T-cell (primary cell): ENCODE measurements at regions of chr12 and their contacts with region 1.

Region 1: GRCh38 chr12:43758728-43759563 is at the starts of genes IRAK4 and PUS7L:
- DNase-seq: peak; percentile 87 to 98 (median 94)
- ATAC-seq: peak; percentile 94 to 99 (median 96)
- H3K4me3 ChIP-seq: peak within 1 kb of the TSS; percentile 64 to 93
- H3K4me3 Mint-ChIP-seq: peak within 1 kb of the TSS; percentile 97 to 98 (median 98)
- H3K27ac ChIP-seq: peak within 1 kb of the TSS; percentile 98
- H3K27ac Mint-ChIP-seq: peak within 1 kb of the TSS; percentile 99
- H3K4me1 ChIP-seq: peaks cover 27 to 32% of the 10 kb centered on the region in 2 experiments
- H3K4me1 Mint-ChIP-seq: peaks cover 83 to 86% (median 84%) of the 10 kb centered on the region in 3 donors
- H3K27me3 ChIP-seq: no peaks in the 10 kb centered on the region
- H3K27me3 Mint-ChIP-seq: no peaks in the 10 kb centered on the region
- total RNA-seq, gene IRAK4: 48.7 to 55.8 (median 49.8) TPM
- total RNA-seq, gene PUS7L: 17.5 to 24.9 (median 19.2) TPM

Region 2: GRCh38 chr12:43789941-43790340 is 31.0 kb after region 1 on chr12:
- CTCF ChIA-PET with region 1: interaction called in 1 of 2 experiments, 5 read pairs
- POLR2A ChIA-PET with region 1: interaction called in 1 of 2 experiments, 20 read pairs
- DNase-seq: no peak
- ATAC-seq: no peak
- H3K4me3 ChIP-seq: no peak overlapping the region
- H3K4me3 Mint-ChIP-seq: no peak overlapping the region
- H3K27ac ChIP-seq: no peak overlapping the region
- H3K27ac Mint-ChIP-seq: peak overlapping the region in 1 of 2 donors; percentile 24
- H3K4me1 ChIP-seq: no peaks in the 10 kb centered on the region
- H3K4me1 Mint-ChIP-seq: no peaks in the 10 kb centered on the region
- H3K27me3 ChIP-seq: no peaks in the 10 kb centered on the region
- H3K27me3 Mint-ChIP-seq: no peaks in the 10 kb centered on the region

Region 3: DNA sequence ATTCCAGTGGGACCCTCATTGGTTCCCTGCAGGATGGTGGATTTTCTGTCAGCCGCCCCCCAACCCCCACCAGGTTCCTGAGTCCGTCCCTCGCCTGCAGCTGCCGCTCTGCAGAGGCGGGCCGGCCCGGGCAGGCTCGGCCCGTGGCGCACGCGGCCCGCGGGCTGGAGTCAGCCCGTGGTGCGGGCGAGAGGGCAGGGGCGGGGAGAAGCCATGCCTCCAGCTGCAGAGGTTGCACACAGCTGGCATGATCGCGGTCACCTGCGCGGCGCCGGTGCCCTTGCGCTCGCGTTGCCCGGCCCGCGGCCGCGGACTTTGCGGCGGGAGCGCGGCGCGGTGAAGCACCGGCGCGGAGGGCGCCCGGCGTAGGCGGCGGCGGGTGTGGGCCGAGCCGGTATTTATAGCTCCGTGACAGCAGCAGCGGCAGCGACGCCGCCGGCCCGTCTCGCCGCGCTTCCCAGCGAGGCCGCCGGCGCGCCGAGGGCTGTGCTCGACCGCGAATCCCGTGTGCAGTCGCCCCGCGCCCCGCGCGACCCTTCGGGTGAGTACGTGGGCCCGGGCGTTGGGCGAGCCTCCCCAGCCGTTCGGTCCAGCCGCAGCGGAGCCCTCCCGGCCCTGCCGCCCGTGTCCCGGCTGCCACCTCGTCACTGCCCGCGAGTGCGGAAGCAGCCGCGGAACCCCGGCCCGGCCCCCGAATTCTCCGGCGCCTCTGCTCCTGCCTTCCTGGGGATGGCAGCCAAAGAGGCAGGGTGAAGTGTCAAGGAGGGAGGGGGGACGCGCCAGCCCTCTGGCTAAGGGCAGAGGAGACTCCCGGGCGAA is 76.9 kb after region 1 on chr12 and contains the start of gene TMEM117:
- CTCF ChIA-PET with region 1: interaction called in 1 of 2 experiments, 3 read pairs
- POLR2A ChIA-PET with region 1: interaction called in 1 of 2 experiments, 14 read pairs
- DNase-seq: peak; percentile 12 to 69 (median 52)
- ATAC-seq: peak; percentile 79 to 83 (median 80)
- H3K4me3 ChIP-seq: peak within 1 kb of the TSS; percentile 58 to 74
- H3K4me3 Mint-ChIP-seq: peak within 1 kb of the TSS; percentile 76 to 88 (median 79)
- H3K27ac ChIP-seq: peak within 1 kb of the TSS; percentile 78
- H3K27ac Mint-ChIP-seq: peak within 1 kb of the TSS; percentile 81 to 85
- H3K4me1 ChIP-seq: peaks cover 10 to 22% of the 10 kb centered on the region in 2 experiments
- H3K4me1 Mint-ChIP-seq: peaks cover 48 to 62% (median 49%) of the 10 kb centered on the region in 3 donors
- H3K27me3 ChIP-seq: no peaks in the 10 kb centered on the region
- H3K27me3 Mint-ChIP-seq: no peaks in the 10 kb centered on the region
- total RNA-seq, gene TMEM117: 3.3 to 4.4 (median 3.9) TPM